Body of pancreas (tissue), 4 donors: ENCODE measurements at regions of chr3 and their contacts with region 1.

Region 1: GRCh38 chr3:50572158-50572557 is 2.8 kb downstream of the HEMK1 start:
- DNase-seq: peak; percentile 78 to 84 (median 81)
- ATAC-seq: peak; percentile 39
- H3K4me3 ChIP-seq: no peak overlapping the region
- H3K27ac ChIP-seq: no peak overlapping the region
- H3K4me1 ChIP-seq: peaks cover 33% of the 10 kb centered on the region
- H3K27me3 ChIP-seq: no peaks in the 10 kb centered on the region
- CTCF ChIP-seq: peak; percentile 85 to 98 (median 94)
- POLR2A ChIP-seq: no peak

Region 2: GRCh38 chr3:50486219-50486888 is 85.8 kb before region 1 on chr3:
- intact Hi-C with region 1: no loop called
- DNase-seq: no peak
- ATAC-seq: no peak
- H3K4me3 ChIP-seq: no peak overlapping the region
- H3K27ac ChIP-seq: no peak overlapping the region
- H3K4me1 ChIP-seq: no peaks in the 10 kb centered on the region
- H3K27me3 ChIP-seq: no peaks in the 10 kb centered on the region
- CTCF ChIP-seq: no peak
- POLR2A ChIP-seq: no peak

Region 3: DNA sequence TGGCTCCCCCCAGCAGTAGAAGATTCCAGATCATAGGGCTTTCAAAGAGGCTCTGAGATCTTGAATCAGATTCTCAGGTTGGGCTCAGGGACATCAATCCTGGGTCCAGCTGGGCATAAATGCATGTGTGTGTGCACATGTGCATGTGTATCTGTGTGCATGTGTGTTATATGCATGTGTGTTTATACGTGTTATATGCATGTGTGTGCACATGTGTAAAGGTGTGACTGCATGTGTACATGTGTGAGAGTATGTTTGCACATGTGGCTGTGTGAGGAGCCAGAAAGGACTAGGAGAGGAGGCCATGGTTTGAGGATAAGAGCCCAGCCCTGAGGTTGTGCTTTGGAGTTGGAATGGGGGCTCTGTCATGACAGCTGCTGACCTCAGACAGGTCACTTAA is 43.0 kb after region 1 on chr3:
- intact Hi-C with region 1: loop called (anchors 2 kb)
- DNase-seq: no peak
- ATAC-seq: no peak
- H3K4me3 ChIP-seq: no peak overlapping the region
- H3K27ac ChIP-seq: no peak overlapping the region
- H3K4me1 ChIP-seq: peaks cover 64% of the 10 kb centered on the region
- H3K27me3 ChIP-seq: no peaks in the 10 kb centered on the region
- CTCF ChIP-seq: no peak
- POLR2A ChIP-seq: no peak